Prostate gland (tissue), 2 donors: ENCODE measurements at regions of chr4 and their contacts with region 1.

Region 1: DNA sequence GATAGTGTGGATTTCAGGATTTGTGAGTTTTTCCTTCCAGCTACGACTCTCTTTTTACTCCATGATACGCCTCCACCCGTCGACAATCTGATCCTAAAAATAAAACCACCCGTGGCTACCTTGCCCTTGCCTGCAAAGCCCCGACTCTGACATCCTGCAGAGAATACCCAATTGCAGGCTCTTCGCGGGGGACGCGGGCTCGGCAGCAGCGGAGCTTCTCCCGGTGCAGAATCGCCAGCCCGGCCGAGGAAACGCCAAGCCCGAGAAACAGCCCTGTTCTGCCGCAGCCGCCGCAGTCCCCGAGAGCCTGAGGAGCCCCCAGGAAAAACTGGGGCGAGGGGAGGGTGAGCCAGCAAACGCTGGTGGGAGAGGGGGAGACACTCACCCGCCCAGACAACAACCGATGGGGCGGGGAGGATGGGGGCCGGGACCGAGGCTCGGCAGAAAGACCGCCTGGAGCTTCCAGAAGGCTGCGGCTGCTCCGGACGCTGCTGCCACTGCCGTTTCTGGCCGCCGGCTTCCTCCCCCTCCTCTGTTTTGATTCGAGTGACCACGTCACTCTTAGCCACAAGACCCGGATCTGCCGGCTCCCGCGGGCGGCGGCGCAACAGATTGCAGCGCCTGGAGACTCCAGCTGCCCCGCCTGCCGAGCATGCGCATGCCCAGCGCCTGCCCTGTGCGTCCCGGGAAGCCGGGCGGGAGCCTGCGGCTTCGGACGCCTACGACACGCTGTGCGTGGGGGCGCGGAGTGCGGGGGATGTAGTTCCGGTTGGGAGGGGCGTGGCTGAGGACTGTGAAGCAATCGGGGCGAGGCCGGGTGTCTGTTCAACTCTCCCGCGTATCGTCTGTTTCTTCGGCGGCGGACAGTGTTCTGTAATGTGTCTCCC is at the start of gene SMIM14:
- DNase-seq: peak; percentile 96
- H3K4me3 ChIP-seq: peak within 1 kb of the TSS; percentile 88 to 99
- H3K27ac ChIP-seq: peak within 1 kb of the TSS; percentile 99
- H3K4me1 ChIP-seq: peaks cover 12% of the 10 kb centered on the region
- H3K27me3 ChIP-seq: no peaks in the 10 kb centered on the region
- CTCF ChIP-seq: peak in 2 of 4 experiments; percentile 52 to 70
- POLR2A ChIP-seq: peak; percentile 97
- total RNA-seq, gene SMIM14: 36.1 to 101 TPM

Region 2: GRCh38 chr4:39319678-39320077 is 318.9 kb before region 1 on chr4:
- intact Hi-C with region 1: no loop called
- DNase-seq: no peak
- H3K4me3 ChIP-seq: no peak overlapping the region
- H3K27ac ChIP-seq: no peak overlapping the region
- H3K4me1 ChIP-seq: no peaks in the 10 kb centered on the region
- H3K27me3 ChIP-seq: no peaks in the 10 kb centered on the region
- CTCF ChIP-seq: no peak
- POLR2A ChIP-seq: no peak

Region 3: GRCh38 chr4:39365830-39366771 is 272.5 kb before region 1 on chr4 and contains the start of gene RFC1:
- intact Hi-C with region 1: loop called (anchors 10 kb)
- DNase-seq: peak; percentile 89
- H3K4me3 ChIP-seq: peak within 1 kb of the TSS; percentile 82 to 85
- H3K27ac ChIP-seq: peak within 1 kb of the TSS; percentile 84 to 86
- H3K4me1 ChIP-seq: no peaks in the 10 kb centered on the region
- H3K27me3 ChIP-seq: no peaks in the 10 kb centered on the region
- CTCF ChIP-seq: peak in 1 of 4 experiments; percentile 11
- POLR2A ChIP-seq: peak; percentile 53
- total RNA-seq, gene RFC1: 27.7 to 33.3 TPM

Region 4: DNA sequence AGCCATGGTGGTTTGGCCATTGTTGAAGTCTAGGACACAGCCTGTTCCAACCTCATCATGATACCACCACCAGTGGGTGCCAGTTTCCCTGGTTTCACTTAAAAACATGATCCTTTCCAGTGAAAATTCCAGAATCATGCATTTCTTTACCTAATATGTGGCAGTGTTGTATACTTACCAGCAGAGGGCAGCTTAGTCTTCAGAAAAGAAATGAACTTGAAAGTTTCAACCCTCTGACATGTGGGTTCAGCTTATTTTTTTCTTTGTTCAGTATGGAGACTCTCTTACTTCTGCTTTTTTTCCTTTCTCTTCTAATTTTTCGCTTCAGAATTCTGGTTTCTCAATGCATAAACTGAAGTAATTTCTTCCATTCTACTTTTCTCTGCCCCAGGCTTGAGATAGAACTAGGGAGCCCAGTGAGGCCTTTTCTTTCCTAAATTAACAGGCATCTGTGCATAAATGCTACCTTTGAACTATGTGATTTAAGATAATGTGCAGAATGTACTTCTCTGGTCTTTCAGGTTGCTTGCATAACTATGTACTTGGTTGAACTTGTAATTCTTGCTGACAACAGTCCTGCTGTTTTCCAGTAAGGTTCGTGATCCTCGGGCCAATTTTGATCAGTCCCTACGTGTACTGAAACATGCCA is 169.0 kb before region 1 on chr4:
- intact Hi-C with region 1: loop called (anchors 10 kb)
- DNase-seq: peak; percentile 31
- H3K4me3 ChIP-seq: no peak overlapping the region
- H3K27ac ChIP-seq: peak overlapping the region; percentile 4 to 59
- H3K4me1 ChIP-seq: no peaks in the 10 kb centered on the region
- H3K27me3 ChIP-seq: no peaks in the 10 kb centered on the region
- CTCF ChIP-seq: peak; percentile 65 to 89 (median 81)
- POLR2A ChIP-seq: no peak

Region 5: GRCh38 chr4:39527273-39528060 is 111.1 kb before region 1 on chr4 and contains the start of gene UGDH:
- intact Hi-C with region 1: loop called (anchors 2 kb)
- DNase-seq: peak; percentile 98
- H3K4me3 ChIP-seq: peak within 1 kb of the TSS; percentile 66 to 89
- H3K27ac ChIP-seq: peak within 1 kb of the TSS; percentile 95 to 97
- H3K4me1 ChIP-seq: peaks cover 5% of the 10 kb centered on the region
- H3K27me3 ChIP-seq: no peaks in the 10 kb centered on the region
- CTCF ChIP-seq: peak in 2 of 4 experiments; percentile 4 to 30
- POLR2A ChIP-seq: peak; percentile 97
- total RNA-seq, gene UGDH: 59.0 to 147 TPM

Region 6: DNA sequence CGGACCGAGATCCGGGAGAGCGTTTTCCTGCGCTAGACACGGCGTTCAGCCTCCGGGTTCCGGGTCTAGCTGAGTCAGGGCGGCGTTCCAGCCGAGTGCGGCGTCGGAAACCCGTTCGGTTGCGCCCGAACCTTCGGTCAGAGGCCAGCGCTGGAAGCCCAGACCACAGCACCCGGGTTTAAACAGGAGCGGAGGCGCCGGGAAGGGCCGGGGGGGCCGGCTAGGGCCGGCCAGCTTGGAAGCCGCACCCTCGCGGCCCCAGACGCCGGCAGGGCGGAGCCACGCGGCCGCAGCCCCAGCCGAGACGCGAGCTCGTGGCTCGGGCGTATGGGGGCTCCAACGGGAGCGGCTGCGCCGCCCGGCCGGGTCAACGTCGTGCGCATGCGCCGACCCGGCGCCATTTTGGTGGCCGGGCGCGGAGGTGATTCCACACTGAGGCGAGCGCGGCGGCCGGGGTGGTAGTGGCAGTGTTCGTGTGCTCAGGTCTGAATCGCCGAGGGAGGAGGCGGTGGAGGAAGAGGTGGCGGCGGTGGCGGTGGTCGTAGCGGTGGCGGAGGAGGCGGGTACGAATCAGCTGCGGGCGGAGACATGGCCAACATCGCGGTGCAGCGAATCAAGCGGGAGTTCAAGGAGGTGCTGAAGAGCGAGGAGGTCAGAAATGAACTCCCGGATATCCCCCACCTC is 59.3 kb after region 1 on chr4 and contains the start of gene UBE2K:
- intact Hi-C with region 1: loop called (anchors 5 kb)
- DNase-seq: peak; percentile 75
- H3K4me3 ChIP-seq: peak within 1 kb of the TSS; percentile 76 to 93
- H3K27ac ChIP-seq: peak within 1 kb of the TSS; percentile 95
- H3K4me1 ChIP-seq: no peaks in the 10 kb centered on the region
- H3K27me3 ChIP-seq: no peaks in the 10 kb centered on the region
- CTCF ChIP-seq: peak in 2 of 4 experiments; percentile 16 to 25
- POLR2A ChIP-seq: peak; percentile 79
- total RNA-seq, gene UBE2K: 25.6 to 30.3 TPM